ENCODE measurements at regions of chrX and their contacts with region 1.

Region 1: GRCh38 chrX:47233337-47234113 is 716 bp downstream of the USP11 start:
- DNase-seq: peak; percentile 98

Region 2: DNA sequence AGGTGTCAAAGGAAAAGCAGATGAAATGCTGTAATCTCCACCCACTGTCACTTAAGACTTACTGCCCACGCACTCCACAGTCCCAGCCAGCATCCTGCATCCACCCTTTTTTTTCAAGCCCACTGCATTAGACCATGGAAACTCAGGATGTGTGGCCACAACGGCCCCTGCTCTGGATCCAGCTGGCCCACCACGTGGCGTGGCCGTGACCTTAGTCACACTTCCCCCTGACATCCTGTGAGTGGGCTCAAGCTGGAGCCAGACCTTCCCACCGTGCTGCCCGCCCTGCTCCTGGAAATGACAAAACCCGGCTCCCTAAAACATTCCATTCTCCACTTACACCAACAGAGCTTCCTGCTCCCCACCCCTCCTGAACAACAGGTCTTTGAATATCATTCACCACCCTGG is 1444.6 kb before region 1 on chrX:
- intact Hi-C with region 1: no loop called
- DNase-seq: no peak

Region 3: GRCh38 chrX:47012131-47012530 is 221.4 kb before region 1 on chrX:
- intact Hi-C with region 1: no loop called
- DNase-seq: no peak

Region 4: DNA sequence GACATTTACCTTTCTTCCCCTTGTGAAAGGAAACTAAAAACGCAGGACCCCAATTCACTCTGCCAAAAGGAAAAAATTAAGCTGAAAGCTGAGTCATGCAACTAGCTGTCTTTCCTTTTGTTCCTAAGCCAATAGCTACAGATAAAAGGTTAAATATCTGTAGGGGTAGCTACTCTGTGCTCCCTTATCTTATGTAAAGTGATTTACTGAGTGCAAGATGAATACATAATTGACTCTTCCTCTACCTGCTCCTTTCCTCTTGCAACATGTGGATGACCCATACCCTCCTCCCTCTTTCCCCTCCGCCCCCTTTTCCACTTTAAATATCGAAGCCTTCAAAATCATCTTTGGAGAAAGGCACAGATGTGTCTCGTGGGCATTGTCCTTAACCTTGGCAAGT is 68.9 kb after region 1 on chrX:
- intact Hi-C with region 1: loop called in 1 of 2 experiments (anchors 2 kb)
- DNase-seq: no peak

Region 5: DNA sequence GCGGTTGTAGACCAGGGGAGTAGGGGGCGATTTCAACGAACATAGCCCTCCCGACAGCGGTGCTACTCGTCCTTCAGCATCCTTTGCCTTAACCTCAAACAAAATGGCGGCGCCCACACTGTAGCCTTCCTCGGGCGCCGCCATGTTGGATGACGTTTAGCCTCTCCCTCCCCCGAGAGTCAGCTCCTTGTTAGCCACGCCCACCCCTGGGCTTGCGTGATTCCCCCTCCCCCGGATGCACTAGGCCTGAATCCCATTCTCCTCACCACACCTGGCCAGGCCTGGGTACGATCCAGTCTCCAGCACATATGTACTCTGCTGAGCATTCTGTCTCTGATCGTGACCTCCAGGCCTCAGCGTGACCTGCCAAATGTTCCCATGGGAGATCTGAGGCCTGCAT is 87.9 kb after region 1 on chrX:
- intact Hi-C with region 1: loop called in 1 of 2 experiments (anchors 2 kb)
- DNase-seq: peak; percentile 84